ENCODE measurements at regions of chr4 and their contacts with region 1.

Region 1: DNA sequence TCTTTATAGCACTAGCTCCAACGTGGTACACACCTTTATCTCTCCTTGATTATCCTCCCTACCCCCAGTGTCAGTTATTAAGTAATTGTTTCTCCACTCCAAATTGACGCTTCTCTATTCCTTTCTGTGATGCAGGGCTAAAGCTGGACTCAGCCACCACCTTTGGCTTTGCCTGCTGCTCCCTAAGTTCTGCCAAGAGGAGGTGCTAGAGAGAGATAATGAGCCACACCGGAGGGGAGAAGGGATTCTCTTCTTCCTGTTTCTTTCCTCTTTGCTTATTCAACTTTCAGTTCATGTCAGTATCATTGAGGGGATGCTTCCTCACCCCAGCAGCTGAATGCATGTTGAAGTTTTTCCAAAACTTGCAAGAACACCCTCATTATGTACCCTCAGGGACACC is 176.5 kb downstream of the GBA3 start:
- DNase-seq: no peak
- H3K4me3 ChIP-seq: no peak overlapping the region
- H3K27ac ChIP-seq: no peak overlapping the region
- H3K4me1 ChIP-seq: no peaks in the 10 kb centered on the region
- H3K27me3 ChIP-seq: no peaks in the 10 kb centered on the region
- CTCF ChIP-seq: peak; percentile 46 to 72 (median 49)
- EP300 ChIP-seq: no peak
- POLR2A ChIP-seq: no peak
- RAD21 ChIP-seq: peak; percentile 40 to 51; a peak in 3 of 4 replicates

Region 2: GRCh38 chr4:22857411-22857810 is 11.8 kb before region 1 on chr4:
- CTCF ChIA-PET with region 1: interaction called, 10 read pairs
- POLR2A ChIA-PET with region 1: no interaction called
- DNase-seq: no peak
- H3K4me3 ChIP-seq: no peak overlapping the region
- H3K27ac ChIP-seq: no peak overlapping the region
- H3K4me1 ChIP-seq: no peaks in the 10 kb centered on the region
- H3K27me3 ChIP-seq: no peaks in the 10 kb centered on the region
- CTCF ChIP-seq: no peak
- EP300 ChIP-seq: no peak
- POLR2A ChIP-seq: no peak
- RAD21 ChIP-seq: no peak

Measured in H1 (cell line).